GM13976 (cell line): ENCODE measurements at regions of chr4 and their contacts with region 1.

Region 1: DNA sequence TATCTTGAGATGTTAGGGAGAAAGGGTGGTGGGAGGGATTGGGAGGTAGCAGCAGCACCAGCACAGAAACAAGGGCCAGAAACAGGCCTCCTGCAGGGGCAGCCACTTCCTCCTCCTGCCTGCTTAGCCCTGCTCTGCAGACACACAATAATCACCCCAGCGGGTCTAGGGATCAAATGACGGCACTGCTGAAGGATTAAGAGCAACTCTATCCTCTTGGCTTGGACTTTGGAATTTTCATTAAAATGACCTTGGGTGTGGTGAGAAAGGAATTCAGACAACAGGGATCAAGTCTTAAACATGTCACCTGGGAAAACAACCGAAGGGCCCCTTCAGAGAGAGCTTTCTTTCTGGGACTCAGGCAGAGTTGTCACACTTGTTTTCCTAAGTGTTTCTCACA is 353.4 kb downstream of the SPRY1 start:
- DNase-seq: no peak
- CTCF ChIP-seq: no peak

Region 2: DNA sequence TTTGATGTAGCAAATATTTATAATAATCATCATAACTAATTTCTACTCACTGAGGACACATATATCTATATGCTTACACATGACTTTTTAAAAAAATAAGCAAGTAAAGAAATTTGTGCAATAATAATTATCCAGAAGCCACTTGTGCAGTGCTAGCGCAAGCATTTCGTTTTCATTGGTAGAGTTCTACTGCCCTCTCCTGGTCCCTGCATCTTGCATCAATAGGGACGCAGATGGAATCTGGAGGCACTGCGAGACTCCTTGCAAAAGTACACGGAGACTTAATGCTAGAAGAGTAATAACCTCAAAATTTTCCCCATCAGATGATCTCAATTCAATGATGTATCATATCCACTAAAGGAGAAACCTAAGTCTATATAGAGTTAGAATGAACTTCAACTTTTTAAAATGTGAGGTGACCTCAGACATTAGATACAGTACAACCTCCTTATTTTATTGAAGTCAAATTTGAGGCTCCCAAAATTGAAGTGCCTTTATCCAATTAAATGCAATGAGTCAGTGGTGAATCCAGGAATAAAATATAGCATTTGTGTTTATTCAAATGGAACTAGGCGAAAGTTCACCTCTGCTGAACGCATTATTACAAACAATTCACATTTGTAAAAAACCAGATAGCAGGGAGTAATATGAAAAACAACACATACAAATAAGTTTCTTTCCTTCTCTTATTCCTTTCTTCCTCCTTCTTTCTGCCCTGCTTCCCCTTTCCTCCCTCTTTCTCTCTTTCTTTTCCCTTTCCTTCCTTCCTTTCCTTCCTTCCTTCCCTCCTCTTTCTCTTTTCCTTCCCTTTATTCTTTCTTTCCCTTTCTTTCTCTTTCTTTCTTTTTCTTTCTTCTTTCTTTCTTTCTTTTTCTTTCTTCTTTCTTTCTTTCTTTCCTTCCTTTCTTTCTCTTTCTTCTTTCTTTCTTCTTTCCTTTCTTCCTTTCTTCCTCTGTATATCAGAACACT is 512.5 kb after region 1 on chr4:
- in situ Hi-C with region 1: loop called (anchors 25 kb)
- DNase-seq: peak; percentile 33
- CTCF ChIP-seq: peak; percentile 68